Pancreas (tissue), 10 donors: ENCODE measurements at regions of chr11 and their contacts with region 1.

Region 1: DNA sequence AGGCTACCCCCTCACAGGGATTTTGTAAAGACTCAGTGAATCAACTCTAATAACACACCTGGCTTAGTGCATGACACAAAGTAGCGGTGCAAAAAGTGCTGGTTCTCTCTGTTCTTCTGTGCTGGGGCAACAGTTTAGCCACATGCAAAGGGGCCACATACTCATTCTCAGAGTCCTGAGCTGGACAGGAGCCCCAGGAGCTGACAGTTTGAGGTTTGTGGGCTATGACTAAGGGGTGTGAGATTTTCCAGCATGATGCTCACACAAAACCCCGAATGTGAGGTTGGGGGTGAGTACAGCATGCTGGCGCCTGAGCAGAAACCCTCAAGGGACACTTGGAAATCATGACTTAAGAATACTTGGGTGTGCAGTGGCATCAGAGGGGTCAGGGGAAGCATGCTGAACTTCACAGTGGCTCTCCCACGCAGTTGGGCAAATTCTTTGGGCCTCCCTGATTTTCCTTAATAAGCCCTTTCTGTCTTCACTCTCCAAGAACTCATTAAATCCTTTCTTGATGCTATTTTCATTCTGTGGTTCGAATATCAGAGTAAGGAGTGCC is 31.0 kb downstream of the TMPRSS5 start:
- DNase-seq: no peak
- ATAC-seq: peak in 2 of 4 donors; percentile 45
- H3K4me3 ChIP-seq: no peak overlapping the region
- H3K27ac ChIP-seq: no peak overlapping the region
- H3K4me1 ChIP-seq: no peaks in the 10 kb centered on the region
- H3K27me3 ChIP-seq: no peaks in the 10 kb centered on the region
- CTCF ChIP-seq: no peak

Region 2: DNA sequence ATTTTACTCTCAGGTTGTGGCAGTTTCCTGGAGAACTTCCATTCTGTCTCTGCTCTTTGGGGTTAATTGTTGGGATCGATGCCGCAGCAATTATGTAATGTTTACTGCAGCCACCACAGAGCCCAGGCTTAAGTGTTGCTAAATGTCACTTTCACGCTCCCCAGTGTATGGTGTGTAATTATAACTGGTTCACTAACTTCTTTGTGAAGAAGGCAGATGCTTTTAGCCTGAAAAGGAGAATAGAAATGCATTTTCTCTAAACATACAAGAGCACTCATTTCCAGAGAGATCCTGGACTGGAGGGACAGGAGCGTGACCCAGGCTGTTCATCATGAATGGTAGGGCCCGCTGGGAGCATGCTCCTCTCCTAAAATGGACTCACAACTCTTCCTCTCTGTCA is 1282.2 kb before region 1 on chr11:
- intact Hi-C with region 1: no loop called
- DNase-seq: no peak
- ATAC-seq: no peak
- H3K4me3 ChIP-seq: no peak overlapping the region
- H3K27ac ChIP-seq: no peak overlapping the region
- H3K4me1 ChIP-seq: no peaks in the 10 kb centered on the region
- H3K27me3 ChIP-seq: no peaks in the 10 kb centered on the region
- CTCF ChIP-seq: no peak

Region 3: GRCh38 chr11:113618360-113618759 is 56.7 kb before region 1 on chr11:
- intact Hi-C with region 1: loop called in 1 of 3 experiments (anchors 10 kb)
- DNase-seq: no peak
- ATAC-seq: no peak
- H3K4me3 ChIP-seq: no peak overlapping the region
- H3K27ac ChIP-seq: no peak overlapping the region
- H3K4me1 ChIP-seq: no peaks in the 10 kb centered on the region
- H3K27me3 ChIP-seq: no peaks in the 10 kb centered on the region
- CTCF ChIP-seq: no peak

Region 4: GRCh38 chr11:113760241-113760640 is 85.2 kb after region 1 on chr11:
- intact Hi-C with region 1: no loop called
- DNase-seq: no peak
- ATAC-seq: no peak
- H3K4me3 ChIP-seq: no peak overlapping the region
- H3K27ac ChIP-seq: no peak overlapping the region
- H3K4me1 ChIP-seq: no peaks in the 10 kb centered on the region
- H3K27me3 ChIP-seq: no peaks in the 10 kb centered on the region
- CTCF ChIP-seq: no peak